ENCODE measurements at regions of chr1 and their contacts with region 1.

Region 1: DNA sequence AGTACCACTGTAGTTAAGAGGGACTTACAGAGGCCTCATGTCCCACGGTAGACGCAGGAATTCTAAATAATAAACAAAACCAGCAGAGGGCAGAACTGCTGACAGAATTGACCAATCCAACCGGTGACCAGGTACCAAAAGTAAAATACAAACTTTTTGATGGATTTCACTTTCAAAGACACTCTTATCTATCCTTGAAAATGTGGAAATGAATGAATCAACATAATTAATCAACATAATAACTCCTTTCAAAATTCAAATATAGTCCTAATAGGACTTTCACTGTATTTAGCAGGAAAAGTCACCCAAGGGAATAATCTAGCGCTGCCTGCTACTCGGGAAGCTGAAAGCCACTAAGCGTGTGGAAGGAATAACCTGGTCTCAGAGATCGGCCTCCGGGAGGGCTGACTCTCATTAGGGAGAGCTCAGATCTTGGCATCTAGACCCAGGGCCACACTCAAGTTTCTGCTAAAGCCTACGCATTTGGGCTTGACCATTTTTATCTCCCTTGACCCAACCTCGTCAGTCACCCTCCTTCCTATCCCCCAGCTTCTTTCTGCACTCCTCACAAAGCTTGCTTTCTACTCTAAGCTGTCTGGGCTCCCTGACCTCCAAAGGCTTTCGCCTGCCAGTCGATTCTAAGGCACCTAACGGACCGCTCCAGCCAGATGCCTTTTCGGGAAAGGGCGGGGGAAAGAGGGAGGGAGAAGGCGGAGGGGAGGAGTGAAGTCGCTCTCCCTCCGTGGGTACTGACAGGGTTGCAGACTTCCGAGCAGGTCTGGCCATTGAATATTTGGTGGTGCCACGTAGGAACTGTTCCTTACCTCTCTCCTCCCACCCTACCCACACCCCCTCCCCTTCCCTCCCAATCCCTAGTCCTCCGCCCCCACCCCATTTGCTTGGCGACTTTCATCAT is 1.6 kb downstream of the COL11A1 start:
- DNase-seq: no peak
- ATAC-seq: peak in 6 of 8 donors; percentile 46 to 65 (median 56)
- H3K4me3 ChIP-seq: peak overlapping the region in 9 of 10 donors; percentile 18 to 51 (median 42)
- H3K27ac ChIP-seq: no peak overlapping the region
- H3K4me1 ChIP-seq: peaks cover 3 to 20% (median 11%) of the 10 kb centered on the region in 9 donors
- H3K27me3 ChIP-seq: peaks cover 0 to 35% (median 19%) of the 10 kb centered on the region in 7 donors
- CTCF ChIP-seq: peak in 7 of 9 donors; percentile 39 to 65 (median 52)

Region 2: GRCh38 chr1:103461161-103462105 is 354.7 kb after region 1 on chr1:
- intact Hi-C with region 1: loop called in 3 of 10 experiments (anchors 5 kb)
- DNase-seq: no peak
- ATAC-seq: no peak
- H3K4me3 ChIP-seq: no peak overlapping the region
- H3K27ac ChIP-seq: no peak overlapping the region
- H3K4me1 ChIP-seq: no peaks in the 10 kb centered on the region
- H3K27me3 ChIP-seq: no peaks in the 10 kb centered on the region
- CTCF ChIP-seq: peak in 7 of 9 donors; percentile 33 to 65 (median 53)

Region 3: GRCh38 chr1:103509250-103509649 is 402.6 kb after region 1 on chr1:
- intact Hi-C with region 1: loop called in 6 of 10 experiments (anchors 2 to 10 kb)
- DNase-seq: no peak
- ATAC-seq: no peak
- H3K4me3 ChIP-seq: no peak overlapping the region
- H3K27ac ChIP-seq: no peak overlapping the region
- H3K4me1 ChIP-seq: no peaks in the 10 kb centered on the region
- H3K27me3 ChIP-seq: no peaks in the 10 kb centered on the region
- CTCF ChIP-seq: no peak

Region 4: GRCh38 chr1:103514920-103515503 is 408.3 kb after region 1 on chr1:
- intact Hi-C with region 1: loop called in 8 of 10 experiments (anchors 2 to 10 kb)
- DNase-seq: no peak
- ATAC-seq: peak in 1 of 8 donors; percentile 57
- H3K4me3 ChIP-seq: no peak overlapping the region
- H3K27ac ChIP-seq: no peak overlapping the region
- H3K4me1 ChIP-seq: no peaks in the 10 kb centered on the region
- H3K27me3 ChIP-seq: no peaks in the 10 kb centered on the region
- CTCF ChIP-seq: peak; percentile 40 to 82 (median 73)

Region 5: GRCh38 chr1:103524276-103524675 is 417.6 kb after region 1 on chr1:
- intact Hi-C with region 1: loop called in 5 of 10 experiments (anchors 5 to 10 kb)
- DNase-seq: no peak
- ATAC-seq: no peak
- H3K4me3 ChIP-seq: no peak overlapping the region
- H3K27ac ChIP-seq: no peak overlapping the region
- H3K4me1 ChIP-seq: peaks cover 0 to 34% (median 27%) of the 10 kb centered on the region in 9 donors
- H3K27me3 ChIP-seq: no peaks in the 10 kb centered on the region
- CTCF ChIP-seq: no peak